Heart right ventricle (tissue), 16 donors: ENCODE measurements at regions of chr5 and their contacts with region 1.

Region 1: DNA sequence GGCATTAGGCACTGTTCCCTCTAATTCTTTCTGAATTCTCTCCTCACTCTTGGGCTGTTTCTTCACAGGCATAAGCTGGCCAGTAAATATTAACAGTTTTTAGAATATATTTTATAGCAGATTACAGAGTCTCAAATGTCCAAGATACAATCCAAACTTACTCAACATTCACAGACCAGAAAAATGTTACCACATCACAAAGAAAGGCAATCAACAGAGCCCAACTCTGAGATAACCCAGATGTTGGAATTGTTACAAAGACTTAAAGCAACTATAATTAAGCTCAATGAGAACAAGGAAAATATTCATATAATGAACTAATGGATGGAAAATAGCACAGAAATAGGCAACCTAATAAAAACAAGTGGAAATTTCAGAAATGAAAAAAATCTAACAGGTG is 401.1 kb upstream of the RGMB start:
- DNase-seq: no peak
- ATAC-seq: no peak
- H3K4me3 ChIP-seq: no peak overlapping the region
- H3K27ac ChIP-seq: no peak overlapping the region
- H3K4me1 ChIP-seq: no peaks in the 10 kb centered on the region
- H3K27me3 ChIP-seq: no peaks in the 10 kb centered on the region
- CTCF ChIP-seq: no peak

Region 2: GRCh38 chr5:98179791-98180755 is 192.3 kb before region 1 on chr5:
- intact Hi-C with region 1: loop called in 1 of 10 experiments (anchors 10 kb)
- DNase-seq: no peak
- ATAC-seq: peak in 1 of 8 donors; percentile 28
- H3K4me3 ChIP-seq: no peak overlapping the region
- H3K27ac ChIP-seq: no peak overlapping the region
- H3K4me1 ChIP-seq: no peaks in the 10 kb centered on the region
- H3K27me3 ChIP-seq: no peaks in the 10 kb centered on the region
- CTCF ChIP-seq: no peak

Region 3: GRCh38 chr5:98604721-98605425 is 232.5 kb after region 1 on chr5:
- intact Hi-C with region 1: no loop called
- DNase-seq: no peak
- ATAC-seq: no peak
- H3K4me3 ChIP-seq: no peak overlapping the region
- H3K27ac ChIP-seq: no peak overlapping the region
- H3K4me1 ChIP-seq: no peaks in the 10 kb centered on the region
- H3K27me3 ChIP-seq: no peaks in the 10 kb centered on the region
- CTCF ChIP-seq: no peak

Region 4: GRCh38 chr5:98773464-98774191 is 401.3 kb after region 1 on chr5 and contains the start of gene RGMB:
- intact Hi-C with region 1: no loop called
- DNase-seq: peak; percentile 97 to 99
- ATAC-seq: peak; percentile 93 to 99 (median 96)
- H3K4me3 ChIP-seq: peak within 1 kb of the TSS; percentile 72 to 97 (median 82)
- H3K27ac ChIP-seq: peak within 1 kb of the TSS; percentile 84 to 98 (median 93)
- H3K4me1 ChIP-seq: peaks cover 0 to 64% (median 47%) of the 10 kb centered on the region in 9 donors
- H3K27me3 ChIP-seq: peaks cover 0 to 77% (median 0%) of the 10 kb centered on the region in 7 donors
- CTCF ChIP-seq: peak in 1 of 9 donors; percentile 4
- total RNA-seq, gene RGMB: 12.2 to 16.6 (median 14.0) TPM